ENCODE measurements at regions of chr21 and their contacts with region 1.

Region 1: DNA sequence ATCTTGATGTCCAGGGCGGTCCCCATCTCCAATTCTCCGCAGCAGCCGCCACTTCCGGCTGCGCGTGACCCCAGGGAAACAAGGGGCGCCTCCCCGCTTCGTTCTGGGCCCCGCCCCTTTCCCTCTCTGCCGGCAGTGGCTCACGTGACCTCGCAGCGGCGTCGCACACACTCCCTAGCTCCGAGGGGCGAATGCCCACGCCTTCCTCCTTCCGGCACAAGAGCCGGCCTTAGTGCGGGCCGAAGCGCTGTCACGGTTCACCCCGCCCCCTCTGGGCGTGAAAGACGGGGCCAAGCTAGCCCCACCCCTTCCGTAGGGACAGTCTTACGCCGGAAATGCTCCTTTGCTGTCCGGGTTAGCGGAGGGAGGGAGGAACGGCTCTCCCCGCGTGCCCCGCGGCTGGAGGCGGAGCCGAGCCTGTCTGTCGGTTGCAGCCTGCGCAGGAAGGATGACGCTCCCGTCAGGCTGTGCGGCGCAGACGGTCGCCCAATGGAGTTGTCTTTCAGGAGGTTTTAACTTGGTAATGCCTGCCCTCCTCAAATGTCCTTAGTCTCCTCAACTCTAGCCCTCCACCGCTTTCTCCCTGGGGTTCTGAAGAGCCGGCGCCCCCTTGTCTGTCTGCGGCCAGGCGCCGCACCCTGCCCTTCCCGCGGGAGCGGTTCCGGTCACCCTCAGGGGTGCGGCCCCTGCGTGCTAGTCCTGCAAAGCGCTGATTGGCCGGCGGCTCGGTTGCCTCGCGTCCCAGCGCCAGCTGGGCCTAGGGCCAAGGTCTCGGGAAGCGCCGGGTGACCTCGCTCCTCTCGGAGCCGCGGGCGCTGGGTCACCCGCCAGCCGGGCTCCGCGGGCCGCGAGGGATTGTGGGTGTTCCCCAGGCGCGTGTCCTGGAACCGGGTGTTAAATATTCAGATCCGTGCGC is at the start of gene VPS26C:
- DNase-seq: peak; percentile 97 to 99 (median 99)
- H3K4me3 ChIP-seq: peak within 1 kb of the TSS; percentile 80 to 83
- H3K4me3 Mint-ChIP-seq: peak within 1 kb of the TSS; percentile 92 to 96 (median 94)
- H3K27ac ChIP-seq: peak within 1 kb of the TSS; percentile 92
- H3K27ac Mint-ChIP-seq: peak within 1 kb of the TSS; percentile 97 to 99 (median 98)
- H3K4me1 ChIP-seq: peaks cover 43% of the 10 kb centered on the region
- H3K4me1 Mint-ChIP-seq: peaks cover 33 to 64% (median 44%) of the 10 kb centered on the region in 4 donors
- H3K27me3 ChIP-seq: no peaks in the 10 kb centered on the region
- H3K27me3 Mint-ChIP-seq: peaks cover 0 to 4% of the 10 kb centered on the region in 2 donors
- total RNA-seq, gene VPS26C: 76.0 to 79.7 TPM

Region 2: GRCh38 chr21:37072988-37073416 is 194.5 kb before region 1 on chr21 and contains the starts of genes PIGP and TTC3:
- CTCF ChIA-PET with region 1: no interaction called
- POLR2A ChIA-PET with region 1: interaction called, 8 read pairs
- intact Hi-C with region 1: loop called (anchors 1 kb)
- DNase-seq: peak; percentile 93 to 97 (median 96)
- H3K4me3 ChIP-seq: peak within 1 kb of the TSS; percentile 83 to 91
- H3K4me3 Mint-ChIP-seq: peak within 1 kb of the TSS; percentile 95 to 100 (median 98)
- H3K27ac ChIP-seq: peak within 1 kb of the TSS; percentile 91
- H3K27ac Mint-ChIP-seq: peak within 1 kb of the TSS; percentile 92 to 100 (median 98)
- H3K4me1 ChIP-seq: peaks cover 36% of the 10 kb centered on the region
- H3K4me1 Mint-ChIP-seq: peaks cover 31 to 63% (median 44%) of the 10 kb centered on the region in 4 donors
- H3K27me3 ChIP-seq: no peaks in the 10 kb centered on the region
- H3K27me3 Mint-ChIP-seq: no peaks in the 10 kb centered on the region
- total RNA-seq, gene PIGP: 17.2 to 19.7 TPM
- total RNA-seq, gene TTC3: 163 to 171 TPM

Region 3: DNA sequence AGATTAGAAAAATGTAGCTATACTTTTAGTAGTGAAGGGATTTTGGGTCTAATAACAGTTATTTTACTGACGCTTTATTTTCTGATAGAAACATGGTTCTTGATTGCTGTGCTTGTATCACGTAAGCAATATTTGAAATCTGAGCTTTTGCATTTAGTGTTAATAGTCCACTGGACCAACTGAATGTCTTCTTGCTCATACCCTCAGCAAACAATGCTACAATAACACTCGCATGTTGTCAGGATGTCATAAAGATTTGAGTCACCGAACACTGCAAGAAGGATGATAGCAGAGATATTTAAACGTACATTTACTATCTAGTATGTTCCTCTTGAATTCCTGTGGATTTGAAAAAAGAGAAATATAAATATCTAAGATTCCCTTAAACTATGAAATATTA is 106.5 kb after region 1 on chr21:
- CTCF ChIA-PET with region 1: interaction called, 4 read pairs
- POLR2A ChIA-PET with region 1: interaction called, 30 read pairs
- intact Hi-C with region 1: no loop called
- DNase-seq: no peak
- H3K4me3 ChIP-seq: no peak overlapping the region
- H3K4me3 Mint-ChIP-seq: peak overlapping the region in 5 of 8 donors; percentile 49 to 73 (median 59)
- H3K27ac ChIP-seq: no peak overlapping the region
- H3K27ac Mint-ChIP-seq: peak overlapping the region in 2 of 7 donors; percentile 57 to 66
- H3K4me1 ChIP-seq: peaks cover 97% of the 10 kb centered on the region
- H3K4me1 Mint-ChIP-seq: peaks cover 67 to 96% (median 82%) of the 10 kb centered on the region in 4 donors
- H3K27me3 ChIP-seq: no peaks in the 10 kb centered on the region
- H3K27me3 Mint-ChIP-seq: no peaks in the 10 kb centered on the region

Measured in CD4-positive, alpha-beta memory T cell (primary cell).